B cell (primary cell): ENCODE measurements at regions of chr1 and their contacts with region 1.

Region 1: DNA sequence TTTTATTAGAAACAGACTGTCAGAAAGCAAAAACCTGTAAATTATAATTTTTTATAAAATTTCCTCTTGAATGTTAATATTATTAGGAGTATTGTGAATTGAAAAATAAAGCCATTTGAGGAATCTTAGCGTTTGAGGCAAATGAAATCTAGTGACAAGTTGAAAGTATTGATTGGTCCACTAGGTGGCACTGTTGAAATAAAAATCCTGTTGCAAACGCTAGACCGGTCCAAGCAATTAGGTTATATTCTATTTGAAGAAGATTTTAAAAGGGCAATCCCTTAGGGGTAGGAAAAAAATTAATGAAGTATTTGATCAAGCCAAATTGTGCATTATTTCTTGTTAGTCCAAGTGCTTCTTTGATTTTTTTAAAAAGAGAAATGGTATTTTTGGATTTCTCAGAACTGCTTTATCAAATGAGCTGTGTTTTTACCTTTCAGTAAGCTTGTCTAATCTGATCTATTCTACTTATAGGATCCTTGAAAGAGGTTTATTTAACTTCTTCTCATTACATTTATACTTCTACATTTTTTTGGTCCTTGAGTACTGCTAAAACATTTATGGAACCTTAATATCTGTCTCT is 57.7 kb downstream of the ATG4C start:
- DNase-seq: peak; percentile 70
- ATAC-seq: peak; percentile 62
- H3K4me3 ChIP-seq: no peak overlapping the region
- H3K4me3 Mint-ChIP-seq: no peak overlapping the region
- H3K27ac ChIP-seq: no peak overlapping the region
- H3K27ac Mint-ChIP-seq: no peak overlapping the region
- H3K4me1 ChIP-seq: no peaks in the 10 kb centered on the region
- H3K4me1 Mint-ChIP-seq: peaks cover 2% of the 10 kb centered on the region
- H3K27me3 ChIP-seq: no peaks in the 10 kb centered on the region
- H3K27me3 Mint-ChIP-seq: no peaks in the 10 kb centered on the region
- CTCF ChIP-seq: peak; percentile 88

Region 2: DNA sequence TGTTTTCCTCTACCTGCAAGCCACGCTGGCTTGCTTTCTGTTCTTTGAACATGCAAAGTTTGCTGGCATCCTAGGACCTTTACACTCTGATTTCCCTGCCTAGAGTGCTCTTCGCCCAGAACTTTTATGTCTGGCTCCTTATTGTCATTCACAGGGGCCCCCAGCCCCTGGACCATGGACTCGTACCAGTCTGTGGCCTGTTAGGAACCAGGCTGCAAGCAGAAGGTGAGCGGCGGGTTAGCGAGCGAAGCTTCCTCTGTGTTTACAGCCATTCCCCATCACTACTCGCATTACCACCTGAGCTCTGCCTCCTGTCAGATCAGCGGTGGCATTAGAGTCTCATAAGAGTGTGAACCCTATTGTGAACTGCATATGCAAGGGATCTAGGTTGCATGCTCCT is 15.3 kb after region 1 on chr1:
- CTCF ChIA-PET with region 1: interaction called, 13 read pairs
- POLR2A ChIA-PET with region 1: no interaction called
- intact Hi-C with region 1: no loop called
- DNase-seq: no peak
- ATAC-seq: no peak
- H3K4me3 ChIP-seq: no peak overlapping the region
- H3K4me3 Mint-ChIP-seq: no peak overlapping the region
- H3K27ac ChIP-seq: no peak overlapping the region
- H3K27ac Mint-ChIP-seq: no peak overlapping the region
- H3K4me1 ChIP-seq: no peaks in the 10 kb centered on the region
- H3K4me1 Mint-ChIP-seq: no peaks in the 10 kb centered on the region
- H3K27me3 ChIP-seq: no peaks in the 10 kb centered on the region
- H3K27me3 Mint-ChIP-seq: no peaks in the 10 kb centered on the region
- CTCF ChIP-seq: no peak

Region 3: GRCh38 chr1:62882201-62883104 is 40.8 kb after region 1 on chr1:
- CTCF ChIA-PET with region 1: no interaction called
- POLR2A ChIA-PET with region 1: no interaction called
- intact Hi-C with region 1: no loop called
- DNase-seq: no peak
- ATAC-seq: no peak
- H3K4me3 ChIP-seq: no peak overlapping the region
- H3K4me3 Mint-ChIP-seq: no peak overlapping the region
- H3K27ac ChIP-seq: no peak overlapping the region
- H3K27ac Mint-ChIP-seq: no peak overlapping the region
- H3K4me1 ChIP-seq: no peaks in the 10 kb centered on the region
- H3K4me1 Mint-ChIP-seq: no peaks in the 10 kb centered on the region
- H3K27me3 ChIP-seq: peaks cover 0 to 5% (median 3%) of the 10 kb centered on the region in 4 experiments
- H3K27me3 Mint-ChIP-seq: peaks cover 50% of the 10 kb centered on the region
- CTCF ChIP-seq: no peak

Region 4: GRCh38 chr1:63143482-63143881 is 301.8 kb after region 1 on chr1:
- CTCF ChIA-PET with region 1: no interaction called
- POLR2A ChIA-PET with region 1: no interaction called
- intact Hi-C with region 1: no loop called
- DNase-seq: no peak
- ATAC-seq: no peak
- H3K4me3 ChIP-seq: no peak overlapping the region
- H3K4me3 Mint-ChIP-seq: no peak overlapping the region
- H3K27ac ChIP-seq: no peak overlapping the region
- H3K27ac Mint-ChIP-seq: no peak overlapping the region
- H3K4me1 ChIP-seq: no peaks in the 10 kb centered on the region
- H3K4me1 Mint-ChIP-seq: no peaks in the 10 kb centered on the region
- H3K27me3 ChIP-seq: peaks cover 0 to 3% (median 1%) of the 10 kb centered on the region in 4 experiments
- H3K27me3 Mint-ChIP-seq: peaks cover 16% of the 10 kb centered on the region
- CTCF ChIP-seq: no peak

Region 5: DNA sequence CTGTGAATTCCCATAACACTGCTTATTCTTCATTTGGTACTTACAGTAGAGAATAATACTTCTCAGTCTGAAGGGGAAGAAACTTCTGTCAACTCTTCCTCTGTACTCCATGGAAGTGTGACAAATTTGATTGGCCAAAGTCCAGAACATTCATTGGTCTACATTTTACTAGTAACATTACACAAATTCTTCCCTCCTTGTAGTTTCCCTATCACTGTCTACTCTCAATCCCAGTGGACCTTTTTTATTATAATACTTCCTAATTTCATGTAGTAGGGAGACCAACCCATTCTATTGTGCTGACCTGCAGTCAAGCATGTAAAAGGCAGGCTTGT is 600.4 kb after region 1 on chr1:
- CTCF ChIA-PET with region 1: interaction called, 14 read pairs
- POLR2A ChIA-PET with region 1: no interaction called
- intact Hi-C with region 1: no loop called
- DNase-seq: no peak
- ATAC-seq: no peak
- H3K4me3 ChIP-seq: no peak overlapping the region
- H3K4me3 Mint-ChIP-seq: no peak overlapping the region
- H3K27ac ChIP-seq: no peak overlapping the region
- H3K27ac Mint-ChIP-seq: no peak overlapping the region
- H3K4me1 ChIP-seq: peaks cover 3 to 7% of the 10 kb centered on the region in 2 donors
- H3K4me1 Mint-ChIP-seq: peaks cover 6% of the 10 kb centered on the region
- H3K27me3 ChIP-seq: no peaks in the 10 kb centered on the region
- H3K27me3 Mint-ChIP-seq: no peaks in the 10 kb centered on the region
- CTCF ChIP-seq: no peak

Region 6: DNA sequence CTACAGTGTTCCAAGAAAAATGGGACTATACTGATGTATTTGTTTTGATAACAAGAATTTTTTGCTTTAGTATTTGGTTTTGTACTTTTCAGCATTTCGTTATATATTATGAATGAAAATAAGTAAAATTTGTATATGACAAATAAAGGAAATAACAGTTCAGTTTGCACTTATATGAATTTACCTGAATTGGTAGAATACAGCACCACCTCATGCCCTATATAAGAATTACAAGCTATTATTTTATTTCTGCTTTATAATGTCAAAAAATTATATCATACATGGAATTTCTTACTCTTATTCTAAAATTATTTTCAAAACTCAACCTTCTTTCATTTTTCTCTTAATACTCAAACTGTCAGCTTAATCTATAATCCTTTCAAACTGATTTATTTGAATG is 696.3 kb after region 1 on chr1:
- CTCF ChIA-PET with region 1: interaction called, 15 read pairs
- POLR2A ChIA-PET with region 1: no interaction called
- intact Hi-C with region 1: no loop called
- DNase-seq: peak; percentile 17
- ATAC-seq: no peak
- H3K4me3 ChIP-seq: no peak overlapping the region
- H3K4me3 Mint-ChIP-seq: no peak overlapping the region
- H3K27ac ChIP-seq: no peak overlapping the region
- H3K27ac Mint-ChIP-seq: no peak overlapping the region
- H3K4me1 ChIP-seq: no peaks in the 10 kb centered on the region
- H3K4me1 Mint-ChIP-seq: no peaks in the 10 kb centered on the region
- H3K27me3 ChIP-seq: no peaks in the 10 kb centered on the region
- H3K27me3 Mint-ChIP-seq: no peaks in the 10 kb centered on the region
- CTCF ChIP-seq: peak; percentile 73